Psoas muscle (tissue), 8 donors: ENCODE measurements at regions of chr20 and their contacts with region 1.

Region 1: GRCh38 chr20:34190679-34191090 is 50.5 kb upstream of the ASIP start:
- DNase-seq: peak; percentile 51 to 75
- ATAC-seq: peak; percentile 89 to 96 (median 90)
- H3K4me3 ChIP-seq: no peak overlapping the region
- H3K27ac ChIP-seq: no peak overlapping the region
- H3K4me1 ChIP-seq: peaks cover 5% of the 10 kb centered on the region
- H3K27me3 ChIP-seq: peaks cover 0 to 3% (median 2%) of the 10 kb centered on the region in 3 donors
- CTCF ChIP-seq: peak; percentile 71

Region 2: DNA sequence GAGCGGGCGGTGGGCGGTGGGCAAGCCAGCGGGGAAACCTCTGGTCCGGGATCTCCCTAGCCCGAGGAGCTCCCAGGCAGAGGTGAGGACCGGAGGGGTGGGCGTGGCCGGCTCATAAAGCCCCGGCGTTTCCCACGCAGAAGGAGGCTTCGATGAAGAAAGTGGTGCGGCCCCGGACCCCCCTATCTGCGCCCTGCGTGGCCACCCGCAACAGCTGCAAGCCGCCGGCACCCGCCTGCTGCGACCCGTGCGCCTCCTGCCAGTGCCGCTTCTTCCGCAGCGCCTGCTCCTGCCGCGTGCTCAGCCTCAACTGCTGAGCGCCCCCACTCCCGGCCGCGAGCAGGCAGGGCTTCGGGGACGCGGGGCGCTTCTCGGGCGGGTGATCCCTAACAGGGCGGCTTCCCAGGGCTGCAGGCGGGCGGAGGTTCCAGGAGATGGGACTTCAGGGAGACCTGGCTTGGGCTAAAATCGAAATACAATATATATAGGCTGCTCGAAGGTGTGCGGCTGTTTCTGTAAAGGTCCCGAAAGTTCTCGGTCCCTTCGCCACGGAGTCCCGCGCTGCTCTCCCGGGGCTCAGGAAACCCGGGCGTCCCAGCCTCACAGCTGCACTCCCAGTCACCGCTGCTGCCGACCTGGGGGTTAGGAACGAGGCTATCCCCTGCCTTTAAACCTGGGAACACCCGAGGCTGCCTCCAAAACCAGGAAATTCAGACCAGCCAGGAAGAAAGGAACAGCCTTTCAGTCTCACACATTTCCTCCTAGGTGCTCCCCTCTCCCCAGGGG is 78.4 kb after region 1 on chr20:
- intact Hi-C with region 1: loop called in 1 of 2 experiments (anchors 10 kb)
- DNase-seq: peak in 1 of 2 donors; percentile 27
- ATAC-seq: peak; percentile 34 to 61 (median 56)
- H3K4me3 ChIP-seq: peak overlapping the region; percentile 53
- H3K27ac ChIP-seq: no peak overlapping the region
- H3K4me1 ChIP-seq: no peaks in the 10 kb centered on the region
- H3K27me3 ChIP-seq: no peaks in the 10 kb centered on the region
- CTCF ChIP-seq: no peak

Region 3: GRCh38 chr20:34522969-34523871 is 332.5 kb after region 1 on chr20:
- intact Hi-C with region 1: loop called in 1 of 2 experiments (anchors 10 kb)
- DNase-seq: peak; percentile 60 to 79
- ATAC-seq: peak; percentile 76 to 83 (median 82)
- H3K4me3 ChIP-seq: no peak overlapping the region
- H3K27ac ChIP-seq: peak overlapping the region; percentile 79
- H3K4me1 ChIP-seq: peaks cover 56% of the 10 kb centered on the region
- H3K27me3 ChIP-seq: no peaks in the 10 kb centered on the region
- CTCF ChIP-seq: peak; percentile 72